Heart left ventricle (tissue), 16 donors: ENCODE measurements at regions of chrX and their contacts with region 1.

Region 1: DNA sequence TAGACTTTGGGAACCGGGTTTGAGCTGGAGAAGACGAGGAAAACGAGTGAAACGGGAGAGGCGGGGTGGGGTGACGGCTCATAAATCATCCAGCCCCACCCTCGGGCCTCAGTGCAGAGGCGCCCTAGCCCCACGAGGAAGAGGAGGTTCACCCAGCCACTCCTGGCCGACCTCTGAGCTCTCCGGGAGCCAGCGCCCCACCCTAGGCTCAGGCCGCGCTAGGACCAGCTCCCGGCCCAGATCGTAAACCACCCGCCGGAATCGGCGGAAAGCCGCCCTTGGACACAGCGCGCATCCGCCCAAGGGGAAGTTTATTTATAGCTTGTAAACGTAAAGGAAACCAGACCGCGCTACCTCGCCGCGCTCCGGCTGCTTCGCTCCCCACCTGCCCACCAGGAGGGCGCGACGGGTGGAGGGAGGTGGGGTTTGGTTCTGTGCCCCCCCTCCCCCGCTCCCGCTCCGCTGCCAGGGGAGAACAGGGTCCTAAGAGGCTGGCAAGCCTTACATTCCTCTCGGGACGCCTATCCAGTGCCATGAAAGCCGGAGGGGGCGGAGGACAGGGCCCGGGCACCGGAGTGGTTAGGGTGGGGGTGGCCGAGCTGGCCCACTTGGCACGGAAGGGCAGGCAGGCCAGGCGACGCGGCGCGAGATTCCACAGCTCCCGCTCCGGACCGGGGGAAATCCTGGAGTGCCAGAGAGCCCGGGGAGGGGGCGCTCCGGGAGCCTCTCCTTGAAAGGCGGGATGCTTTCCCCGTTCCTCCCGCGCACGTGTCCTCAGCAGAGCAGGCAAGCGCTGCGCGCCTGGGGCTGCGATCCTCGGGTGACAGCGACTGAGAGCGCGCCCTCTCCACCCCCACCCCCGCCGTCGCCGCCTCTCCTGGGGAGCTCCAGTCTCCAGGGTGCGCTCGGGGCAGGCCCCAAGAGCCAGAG is 84.2 kb downstream of the BCOR start:
- DNase-seq: peak; percentile 76 to 81 (median 78)
- ATAC-seq: peak; percentile 60 to 80 (median 68)
- H3K4me3 ChIP-seq: peak overlapping the region; percentile 11 to 80 (median 59)
- H3K27ac ChIP-seq: peak overlapping the region; percentile 88 to 98 (median 94)
- H3K4me1 ChIP-seq: peaks cover 0 to 57% (median 16%) of the 10 kb centered on the region in 12 donors
- H3K27me3 ChIP-seq: peaks cover 0 to 71% (median 0%) of the 10 kb centered on the region in 9 donors
- CTCF ChIP-seq: peak in 1 of 12 donors; percentile 11
- POLR2A ChIP-seq: no peak

Region 2: DNA sequence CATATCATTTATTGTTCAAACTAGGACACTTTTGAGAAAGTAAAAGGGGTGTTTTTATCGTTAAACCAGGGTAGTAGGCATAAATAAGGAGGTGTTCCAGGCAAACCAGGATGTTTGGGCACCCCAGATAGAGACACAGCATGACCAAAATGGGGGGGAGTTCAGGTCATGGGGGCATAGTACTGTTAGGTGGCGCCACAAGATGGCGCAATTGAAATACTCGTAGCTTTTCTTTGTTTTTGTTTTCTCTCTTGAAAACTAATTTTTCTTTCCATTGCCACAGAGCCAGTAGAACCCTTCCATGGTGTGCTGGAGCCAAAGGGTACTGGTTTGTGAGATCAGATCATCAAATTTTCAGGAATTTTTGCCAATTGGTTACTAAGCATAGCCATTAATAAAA is 199.1 kb before region 1 on chrX:
- intact Hi-C with region 1: loop called in 3 of 10 experiments (anchors 5 to 10 kb)
- DNase-seq: no peak
- ATAC-seq: peak in 2 of 4 donors; percentile 22 to 46
- H3K4me3 ChIP-seq: no peak overlapping the region
- H3K27ac ChIP-seq: peak overlapping the region in 9 of 12 donors; percentile 9 to 73 (median 48)
- H3K4me1 ChIP-seq: peaks cover 0 to 19% (median 2%) of the 10 kb centered on the region in 12 donors
- H3K27me3 ChIP-seq: peaks cover 0 to 45% (median 0%) of the 10 kb centered on the region in 9 donors
- CTCF ChIP-seq: peak; percentile 25 to 56 (median 45)
- POLR2A ChIP-seq: no peak

Region 3: GRCh38 chrX:39907964-39908616 is 105.4 kb before region 1 on chrX:
- intact Hi-C with region 1: loop called in 4 of 10 experiments (anchors 5 to 10 kb)
- DNase-seq: peak; percentile 44 to 76 (median 72)
- ATAC-seq: peak; percentile 80 to 93 (median 88)
- H3K4me3 ChIP-seq: no peak overlapping the region
- H3K27ac ChIP-seq: peak overlapping the region in 9 of 12 donors; percentile 27 to 66 (median 38)
- H3K4me1 ChIP-seq: peaks cover 0 to 29% (median 5%) of the 10 kb centered on the region in 12 donors
- H3K27me3 ChIP-seq: peaks cover 0 to 23% (median 0%) of the 10 kb centered on the region in 9 donors
- CTCF ChIP-seq: no peak
- POLR2A ChIP-seq: no peak

Region 4: GRCh38 chrX:40068044-40068443 is 54.5 kb after region 1 on chrX:
- intact Hi-C with region 1: no loop called
- DNase-seq: no peak
- ATAC-seq: no peak
- H3K4me3 ChIP-seq: no peak overlapping the region
- H3K27ac ChIP-seq: no peak overlapping the region
- H3K4me1 ChIP-seq: peaks cover 0 to 8% (median 0%) of the 10 kb centered on the region in 12 donors
- H3K27me3 ChIP-seq: peaks cover 0 to 5% (median 0%) of the 10 kb centered on the region in 9 donors
- CTCF ChIP-seq: no peak
- POLR2A ChIP-seq: no peak

Region 5: GRCh38 chrX:40097497-40098263 is 84.1 kb after region 1 on chrX and contains the start of gene BCOR:
- intact Hi-C with region 1: loop called in 4 of 10 experiments (anchors 2 to 5 kb)
- DNase-seq: peak; percentile 77 to 86 (median 82)
- ATAC-seq: peak in 3 of 4 donors; percentile 28 to 66 (median 59)
- H3K4me3 ChIP-seq: peak within 1 kb of the TSS; percentile 63 to 98 (median 78)
- H3K27ac ChIP-seq: peak within 1 kb of the TSS; percentile 84 to 97 (median 90)
- H3K4me1 ChIP-seq: peaks cover 0 to 63% (median 9%) of the 10 kb centered on the region in 12 donors
- H3K27me3 ChIP-seq: peaks cover 0 to 92% (median 0%) of the 10 kb centered on the region in 9 donors
- CTCF ChIP-seq: no peak
- POLR2A ChIP-seq: peak in 1 of 2 donors; percentile 83
- total RNA-seq, gene BCOR: 11.3 to 40.1 (median 19.5) TPM

Region 6: DNA sequence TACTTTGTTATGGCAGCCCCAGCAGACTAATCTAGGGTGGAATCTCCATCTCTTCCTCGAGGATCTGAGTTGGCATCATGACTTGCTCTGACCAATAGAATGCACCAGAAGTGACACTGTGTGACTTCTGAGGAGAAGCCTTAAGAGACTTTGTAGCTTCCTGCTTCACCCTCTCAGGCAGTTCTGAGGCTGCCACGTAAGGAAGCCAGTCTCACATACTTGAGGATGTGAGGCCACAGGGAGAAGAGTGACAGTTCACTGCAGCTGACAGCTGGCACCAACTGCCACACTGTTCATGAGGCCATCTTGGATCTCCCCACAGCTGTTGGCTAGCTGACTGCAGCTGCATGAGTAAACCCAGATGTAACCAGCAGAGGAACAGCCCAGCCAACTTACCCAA is 113.5 kb after region 1 on chrX:
- intact Hi-C with region 1: no loop called
- DNase-seq: no peak
- ATAC-seq: no peak
- H3K4me3 ChIP-seq: no peak overlapping the region
- H3K27ac ChIP-seq: no peak overlapping the region
- H3K4me1 ChIP-seq: peaks cover 0 to 9% (median 0%) of the 10 kb centered on the region in 12 donors
- H3K27me3 ChIP-seq: peaks cover 0 to 2% (median 0%) of the 10 kb centered on the region in 9 donors
- CTCF ChIP-seq: no peak
- POLR2A ChIP-seq: no peak

Region 7: GRCh38 chrX:40169193-40170101 is 155.9 kb after region 1 on chrX:
- intact Hi-C with region 1: loop called in 4 of 10 experiments (anchors 5 to 10 kb)
- DNase-seq: peak in 4 of 5 donors; percentile 34 to 75 (median 46)
- ATAC-seq: no peak
- H3K4me3 ChIP-seq: peak overlapping the region in 2 of 12 donors; percentile 19 to 43
- H3K27ac ChIP-seq: peak overlapping the region in 2 of 12 donors; percentile 74 to 76
- H3K4me1 ChIP-seq: peaks cover 0 to 56% (median 19%) of the 10 kb centered on the region in 12 donors
- H3K27me3 ChIP-seq: peaks cover 0 to 81% (median 0%) of the 10 kb centered on the region in 9 donors
- CTCF ChIP-seq: peak in 8 of 12 donors; percentile 15 to 35 (median 23)
- POLR2A ChIP-seq: no peak

Region 8: DNA sequence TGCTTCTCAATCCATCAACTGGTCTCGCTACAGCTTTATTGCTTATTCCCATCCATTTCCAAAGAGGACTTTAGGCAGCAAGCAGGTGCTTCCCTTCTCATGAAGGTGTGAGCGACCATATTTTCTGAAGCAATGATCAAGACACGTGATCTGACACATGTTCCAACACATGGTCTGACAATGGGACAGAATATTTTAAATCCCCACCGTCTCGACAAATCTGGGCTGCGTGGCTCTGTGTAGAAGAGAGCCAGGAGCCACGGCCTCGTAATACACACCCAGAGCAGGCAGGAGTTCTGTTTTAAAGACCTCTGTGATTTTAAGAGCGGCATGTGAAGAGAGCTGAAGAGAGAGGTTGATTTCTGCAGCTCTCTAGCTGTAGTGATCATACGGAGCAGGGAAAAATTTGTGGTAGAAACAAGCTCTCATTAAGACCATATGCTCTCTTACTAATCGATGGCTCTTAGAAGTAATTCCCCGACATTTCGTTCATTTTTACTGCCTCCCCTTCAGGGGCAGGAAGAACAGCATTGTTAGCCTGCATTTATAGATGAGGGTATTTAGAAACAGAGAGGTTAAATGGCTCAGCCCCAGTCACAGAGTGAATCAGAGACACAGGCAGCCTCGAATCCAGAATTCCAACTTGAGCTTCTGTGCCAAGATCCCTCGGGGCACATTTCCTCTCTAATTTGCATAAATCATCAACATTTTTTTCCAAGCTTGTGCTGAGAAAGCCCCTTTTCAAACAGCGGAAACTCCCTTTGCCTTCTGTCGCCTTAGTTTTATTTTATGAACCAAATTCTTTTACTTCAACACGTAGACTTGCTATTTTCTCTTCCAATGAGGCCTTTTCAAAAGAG is 175.3 kb after region 1 on chrX:
- intact Hi-C with region 1: no loop called
- DNase-seq: no peak
- ATAC-seq: no peak
- H3K4me3 ChIP-seq: no peak overlapping the region
- H3K27ac ChIP-seq: no peak overlapping the region
- H3K4me1 ChIP-seq: no peaks in the 10 kb centered on the region
- H3K27me3 ChIP-seq: peaks cover 0 to 9% (median 0%) of the 10 kb centered on the region in 9 donors
- CTCF ChIP-seq: no peak
- POLR2A ChIP-seq: no peak

Region 9: GRCh38 chrX:40468033-40468846 is 454.7 kb after region 1 on chrX:
- intact Hi-C with region 1: no loop called
- DNase-seq: peak; percentile 37 to 53 (median 51)
- ATAC-seq: peak; percentile 89 to 94 (median 91)
- H3K4me3 ChIP-seq: no peak overlapping the region
- H3K27ac ChIP-seq: peak overlapping the region in 4 of 12 donors; percentile 9 to 30 (median 19)
- H3K4me1 ChIP-seq: peaks cover 0 to 21% (median 3%) of the 10 kb centered on the region in 12 donors
- H3K27me3 ChIP-seq: peaks cover 0 to 23% (median 0%) of the 10 kb centered on the region in 9 donors
- CTCF ChIP-seq: peak in 10 of 12 donors; percentile 7 to 49 (median 38)
- POLR2A ChIP-seq: no peak